Common myeloid progenitor, CD34-positive (primary cell): ENCODE measurements at regions of chr3 and their contacts with region 1.

Region 1: DNA sequence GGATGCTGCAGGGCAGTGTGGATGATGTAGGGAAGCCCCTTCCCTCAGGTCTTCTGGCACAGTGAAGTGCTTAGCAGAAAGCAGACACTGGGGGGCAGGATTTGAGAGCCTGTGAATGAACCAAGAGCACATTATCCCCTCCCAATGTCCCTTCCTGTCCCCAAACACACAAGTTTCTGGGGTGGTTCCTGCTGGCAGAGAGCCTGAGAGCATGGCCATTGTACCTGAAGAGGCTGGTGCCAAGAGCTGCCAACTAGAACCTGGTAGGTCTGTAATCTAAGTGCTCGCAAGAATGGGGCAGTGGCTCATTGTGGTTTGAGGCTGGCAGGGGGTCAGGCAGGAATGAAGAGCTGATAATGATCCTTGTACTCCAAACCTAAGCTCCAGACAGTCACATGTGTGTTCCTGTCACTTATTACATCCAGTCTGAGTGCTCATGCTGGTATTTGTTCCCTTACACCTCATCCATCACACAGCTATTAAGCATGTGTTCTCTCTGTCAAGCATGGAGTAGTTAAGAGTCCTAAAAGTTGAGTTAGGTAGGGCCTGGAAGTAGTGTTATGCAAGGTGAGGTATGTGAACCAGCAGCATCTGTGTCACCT is 6.7 kb upstream of the CCR1 start:
- DNase-seq: peak; percentile 35 to 46 (median 44)
- H3K4me3 ChIP-seq: no peak overlapping the region
- H3K27ac ChIP-seq: no peak overlapping the region
- H3K4me1 ChIP-seq: peaks cover 9 to 30% (median 19%) of the 10 kb centered on the region in 4 experiments
- H3K27me3 ChIP-seq: no peaks in the 10 kb centered on the region

Region 2: DNA sequence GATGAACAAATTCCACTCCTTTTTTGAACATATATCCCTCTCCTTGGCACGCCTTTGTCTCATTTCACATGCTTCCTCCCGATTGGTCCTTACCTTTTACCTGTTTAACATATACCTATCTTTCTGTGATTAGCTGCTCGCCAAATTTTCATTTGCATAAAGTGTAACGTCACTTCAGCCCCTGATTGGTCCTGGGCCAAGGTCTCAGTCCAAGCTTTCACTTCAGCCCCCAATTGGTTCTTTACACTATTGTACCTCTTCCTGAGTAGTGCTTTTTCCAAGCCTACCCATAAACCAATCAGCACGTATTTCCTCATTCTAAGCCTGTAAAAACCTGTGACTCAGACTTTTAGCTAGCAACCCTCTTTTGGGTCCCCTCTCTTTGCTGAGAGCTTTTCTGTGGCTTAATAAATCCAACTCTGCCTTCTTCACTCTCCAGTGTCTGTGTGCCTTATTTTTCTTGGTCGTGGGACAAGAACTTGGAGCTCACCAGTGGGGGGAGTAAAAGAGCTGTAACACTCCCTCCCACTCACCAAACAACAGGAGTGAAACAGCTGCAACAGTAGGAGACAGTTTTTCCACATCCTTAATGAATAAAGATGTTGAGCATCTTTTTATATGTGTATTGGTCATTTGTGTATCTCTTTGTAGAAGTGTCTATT is 187.0 kb before region 1 on chr3:
- CTCF ChIA-PET with region 1: no interaction called
- POLR2A ChIA-PET with region 1: no interaction called
- DNase-seq: peak in 1 of 3 donors; percentile 11
- H3K4me3 ChIP-seq: no peak overlapping the region
- H3K27ac ChIP-seq: no peak overlapping the region
- H3K4me1 ChIP-seq: no peaks in the 10 kb centered on the region
- H3K27me3 ChIP-seq: no peaks in the 10 kb centered on the region

Region 3: DNA sequence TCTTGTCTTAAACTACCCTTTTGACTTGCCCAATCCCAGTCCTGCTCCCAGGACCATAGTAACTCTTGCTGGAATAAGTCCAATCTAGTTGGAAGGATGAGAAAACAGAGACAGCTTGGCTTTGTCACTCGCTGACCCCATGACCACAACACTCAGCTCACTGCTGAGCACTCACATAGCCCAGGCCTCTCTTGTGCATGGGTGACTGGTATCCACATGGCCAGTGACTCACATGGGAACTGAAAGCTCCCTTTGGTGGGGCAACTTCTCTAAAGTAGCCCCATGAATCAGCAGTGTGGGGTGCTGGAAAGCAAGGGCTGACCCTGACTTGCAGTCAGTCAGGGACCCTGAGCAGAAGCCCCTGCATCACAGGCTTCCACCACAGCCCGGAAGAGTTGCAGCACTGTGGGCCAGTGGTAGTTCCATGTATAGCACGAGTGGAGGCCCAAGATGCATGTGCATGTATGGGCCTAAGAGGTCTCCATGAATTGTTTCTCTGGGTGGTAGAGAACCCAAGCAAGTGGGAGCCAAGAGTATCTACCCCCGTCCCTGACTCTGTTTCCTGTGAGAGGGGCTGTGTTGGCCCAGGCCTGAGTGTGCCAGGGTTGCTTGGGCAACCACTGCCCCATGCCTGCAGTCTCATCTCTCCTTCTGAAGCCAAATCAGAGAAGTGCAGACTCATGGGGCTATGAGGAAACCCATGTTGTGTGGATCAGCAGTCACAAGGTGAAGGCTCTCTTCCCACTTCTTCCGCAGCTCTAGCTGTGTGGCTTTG is 125.4 kb before region 1 on chr3:
- CTCF ChIA-PET with region 1: interaction called, 47 read pairs
- POLR2A ChIA-PET with region 1: no interaction called
- DNase-seq: peak in 2 of 3 donors; percentile 73 to 79
- H3K4me3 ChIP-seq: no peak overlapping the region
- H3K27ac ChIP-seq: no peak overlapping the region
- H3K4me1 ChIP-seq: peaks cover 12 to 56% (median 26%) of the 10 kb centered on the region in 4 experiments
- H3K27me3 ChIP-seq: no peaks in the 10 kb centered on the region